Right ventricle myocardium inferior (tissue), 1 donor: ENCODE measurements at regions of chr10 and their contacts with region 1.

Region 1: DNA sequence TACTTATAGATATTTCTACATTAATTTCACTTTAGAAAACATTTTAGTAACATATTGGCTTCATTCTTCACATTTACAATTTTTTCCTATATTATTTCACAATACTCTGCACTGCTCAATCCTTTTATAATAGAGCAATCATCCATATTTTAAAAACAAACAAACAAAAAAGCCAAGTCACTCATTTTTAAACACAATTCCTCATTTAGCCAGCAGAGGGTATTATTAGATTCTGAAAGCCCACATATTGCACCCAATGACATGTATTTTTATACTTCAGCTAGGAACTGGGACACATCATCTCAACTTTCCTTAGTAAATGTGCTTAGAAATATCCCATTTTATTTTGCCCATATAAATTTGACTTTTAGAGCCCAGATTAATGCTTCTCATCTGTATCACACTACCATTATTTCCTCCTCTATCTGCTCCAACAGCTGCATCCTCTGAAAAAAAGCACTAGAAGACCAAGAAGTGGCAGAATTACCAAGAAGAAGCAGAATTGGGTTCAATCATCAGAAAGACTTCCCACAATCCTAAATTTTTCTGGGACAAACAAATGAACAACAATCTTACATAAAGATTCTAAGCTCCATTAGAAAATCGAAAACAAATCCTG is 29.5 kb downstream of the CTNNA3 start:
- DNase-seq: no peak
- ATAC-seq: peak; percentile 45

Region 2: DNA sequence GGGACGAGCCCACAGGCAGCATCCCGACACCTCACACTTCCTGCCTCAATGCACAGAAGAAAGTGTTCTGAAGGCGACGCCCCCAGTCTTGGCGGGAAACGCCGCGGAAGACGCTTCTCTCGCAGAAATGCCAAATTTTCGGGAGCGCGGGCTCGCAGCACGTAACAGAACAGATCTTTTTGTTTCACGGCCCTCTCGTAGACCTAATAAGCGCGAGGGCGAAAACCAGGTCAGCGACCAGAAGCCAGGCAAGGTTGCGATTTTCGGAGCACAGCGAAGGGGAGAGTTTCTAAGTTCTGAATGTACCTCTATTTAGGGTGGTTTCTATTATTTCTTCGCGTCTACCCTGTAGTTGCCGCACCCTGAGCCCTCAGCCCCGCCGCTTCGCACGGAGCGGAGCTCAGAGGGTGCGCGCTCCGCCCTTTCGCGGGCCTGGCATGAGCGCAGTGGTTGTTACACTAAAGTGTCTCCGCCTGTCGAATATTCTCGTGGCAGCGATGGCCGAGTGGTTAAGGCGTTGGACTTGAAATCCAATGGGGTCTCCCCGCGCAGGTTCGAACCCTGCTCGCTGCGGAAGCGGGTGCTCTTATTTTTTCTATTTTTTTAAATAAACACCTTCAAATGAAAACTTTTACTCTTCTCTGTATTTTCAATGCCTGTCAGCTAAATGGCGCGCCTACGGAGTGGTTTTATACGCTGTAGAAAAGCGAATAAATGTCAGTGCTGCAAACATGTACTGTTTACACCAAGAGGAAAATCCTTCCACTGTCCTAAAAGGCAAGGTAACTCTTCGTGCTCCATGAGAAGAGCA is 97.7 kb after region 1 on chr10:
- intact Hi-C with region 1: loop called (anchors 5 kb)
- DNase-seq: peak; percentile 92
- ATAC-seq: peak; percentile 95